ENCODE measurements at regions of chr5 and their contacts with region 1.

Region 1: DNA sequence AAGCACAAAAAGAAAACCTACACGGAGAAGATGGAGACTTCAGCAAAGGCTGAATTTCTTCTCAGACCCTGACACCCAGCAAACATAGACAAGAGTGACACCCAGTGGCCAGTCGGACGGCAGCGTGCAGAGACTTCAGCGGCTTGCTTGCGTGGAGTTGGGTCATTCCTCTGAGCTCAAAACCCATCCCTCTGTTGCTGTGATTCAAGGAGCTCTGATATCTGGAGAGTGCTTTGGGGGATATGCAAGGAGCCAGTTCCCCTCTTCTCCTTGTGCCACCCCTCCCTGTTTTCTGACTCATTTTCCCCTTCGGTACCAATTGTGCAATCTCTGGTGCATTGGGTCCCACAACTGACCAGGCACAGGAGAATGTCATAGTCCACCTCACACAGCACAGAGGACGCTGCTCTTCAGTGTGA is 27.5 kb downstream of the SH3TC2 start:
- DNase-seq: peak; percentile 87
- H3K4me3 Mint-ChIP-seq: no peak overlapping the region
- H3K27ac Mint-ChIP-seq: no peak overlapping the region
- H3K4me1 Mint-ChIP-seq: peaks cover 17% of the 10 kb centered on the region
- H3K27me3 Mint-ChIP-seq: no peaks in the 10 kb centered on the region
- CTCF ChIP-seq: peak; percentile 96

Region 2: GRCh38 chr5:148457183-148457620 is 578.2 kb before region 1 on chr5:
- CTCF ChIA-PET with region 1: interaction called, 10 read pairs
- POLR2A ChIA-PET with region 1: no interaction called
- intact Hi-C with region 1: no loop called
- DNase-seq: peak; percentile 60
- H3K4me3 Mint-ChIP-seq: no peak overlapping the region
- H3K27ac Mint-ChIP-seq: no peak overlapping the region
- H3K4me1 Mint-ChIP-seq: no peaks in the 10 kb centered on the region
- H3K27me3 Mint-ChIP-seq: peaks cover 45% of the 10 kb centered on the region
- CTCF ChIP-seq: peak; percentile 52

Region 3: GRCh38 chr5:148820461-148821395 is 214.7 kb before region 1 on chr5:
- CTCF ChIA-PET with region 1: interaction called, 28 read pairs
- POLR2A ChIA-PET with region 1: interaction called, 7 read pairs
- intact Hi-C with region 1: loop called (anchors 1 kb)
- DNase-seq: peak; percentile 63
- H3K4me3 Mint-ChIP-seq: no peak overlapping the region
- H3K27ac Mint-ChIP-seq: no peak overlapping the region
- H3K4me1 Mint-ChIP-seq: peaks cover 5% of the 10 kb centered on the region
- H3K27me3 Mint-ChIP-seq: no peaks in the 10 kb centered on the region
- CTCF ChIP-seq: peak; percentile 84

Region 4: GRCh38 chr5:148912714-148913398 is 122.5 kb before region 1 on chr5:
- CTCF ChIA-PET with region 1: interaction called, 43 read pairs
- POLR2A ChIA-PET with region 1: interaction called, 5 read pairs
- intact Hi-C with region 1: loop called (anchors 1 kb)
- DNase-seq: peak; percentile 98
- H3K4me3 Mint-ChIP-seq: peak overlapping the region; percentile 1
- H3K27ac Mint-ChIP-seq: peak overlapping the region; percentile 76
- H3K4me1 Mint-ChIP-seq: peaks cover 68% of the 10 kb centered on the region
- H3K27me3 Mint-ChIP-seq: no peaks in the 10 kb centered on the region
- CTCF ChIP-seq: peak; percentile 75

Region 5: DNA sequence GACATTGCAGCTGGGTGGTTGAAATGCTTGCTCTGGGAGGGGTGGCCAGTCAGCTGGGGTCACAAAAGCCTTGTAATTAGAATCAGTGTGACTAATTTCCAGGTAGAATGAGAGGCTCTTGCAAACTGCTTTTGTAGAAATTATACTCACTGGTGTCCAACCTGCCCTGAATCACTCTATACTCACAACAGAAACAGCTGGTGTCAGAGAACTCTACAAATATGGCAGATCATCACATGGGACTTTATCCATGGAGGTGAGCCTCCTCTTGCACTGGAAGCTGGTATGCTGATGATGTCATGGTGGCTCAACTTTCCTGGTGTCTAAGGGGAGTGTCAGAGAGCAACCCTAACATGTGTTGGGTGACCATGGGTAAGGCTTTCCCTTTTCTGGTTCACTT is 43.8 kb before region 1 on chr5:
- CTCF ChIA-PET with region 1: interaction called, 300 read pairs
- POLR2A ChIA-PET with region 1: interaction called, 4 read pairs
- intact Hi-C with region 1: no loop called
- DNase-seq: no peak
- H3K4me3 Mint-ChIP-seq: no peak overlapping the region
- H3K27ac Mint-ChIP-seq: no peak overlapping the region
- H3K4me1 Mint-ChIP-seq: peaks cover 42% of the 10 kb centered on the region
- H3K27me3 Mint-ChIP-seq: no peaks in the 10 kb centered on the region
- CTCF ChIP-seq: no peak

Region 6: DNA sequence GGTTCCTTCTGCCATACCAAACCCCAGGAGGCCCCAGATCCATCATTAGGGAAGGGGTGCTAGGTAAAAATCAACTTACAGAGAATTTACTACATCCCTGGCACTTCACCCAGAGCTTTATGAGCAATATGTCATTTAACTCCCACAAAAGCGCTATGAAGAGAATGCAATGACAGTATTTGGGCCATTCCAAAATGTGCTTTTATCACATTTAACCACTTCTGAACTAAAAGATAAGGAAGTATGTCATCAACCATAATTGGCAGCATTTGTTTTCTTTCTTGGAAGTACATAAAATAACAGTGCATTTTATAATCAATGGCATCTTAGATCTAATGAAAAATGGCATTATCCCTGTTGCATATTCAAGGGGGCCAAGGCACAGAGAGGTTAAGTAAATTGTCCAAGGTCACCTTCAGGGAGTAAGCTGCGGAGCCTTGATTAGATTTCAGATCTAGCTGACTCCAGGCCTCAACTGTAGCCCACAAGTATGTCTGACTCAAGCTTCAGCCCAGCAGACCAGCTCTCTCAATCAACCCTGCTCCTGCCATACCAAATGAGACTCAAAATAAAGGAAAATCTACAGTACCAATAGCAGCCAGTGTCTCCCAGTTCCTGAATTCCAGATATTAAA is 10.9 kb after region 1 on chr5:
- CTCF ChIA-PET with region 1: interaction called, 82 read pairs
- POLR2A ChIA-PET with region 1: interaction called, 4 read pairs
- intact Hi-C with region 1: no loop called
- DNase-seq: no peak
- H3K4me3 Mint-ChIP-seq: no peak overlapping the region
- H3K27ac Mint-ChIP-seq: no peak overlapping the region
- H3K4me1 Mint-ChIP-seq: peaks cover 6% of the 10 kb centered on the region
- H3K27me3 Mint-ChIP-seq: no peaks in the 10 kb centered on the region
- CTCF ChIP-seq: no peak

Region 7: DNA sequence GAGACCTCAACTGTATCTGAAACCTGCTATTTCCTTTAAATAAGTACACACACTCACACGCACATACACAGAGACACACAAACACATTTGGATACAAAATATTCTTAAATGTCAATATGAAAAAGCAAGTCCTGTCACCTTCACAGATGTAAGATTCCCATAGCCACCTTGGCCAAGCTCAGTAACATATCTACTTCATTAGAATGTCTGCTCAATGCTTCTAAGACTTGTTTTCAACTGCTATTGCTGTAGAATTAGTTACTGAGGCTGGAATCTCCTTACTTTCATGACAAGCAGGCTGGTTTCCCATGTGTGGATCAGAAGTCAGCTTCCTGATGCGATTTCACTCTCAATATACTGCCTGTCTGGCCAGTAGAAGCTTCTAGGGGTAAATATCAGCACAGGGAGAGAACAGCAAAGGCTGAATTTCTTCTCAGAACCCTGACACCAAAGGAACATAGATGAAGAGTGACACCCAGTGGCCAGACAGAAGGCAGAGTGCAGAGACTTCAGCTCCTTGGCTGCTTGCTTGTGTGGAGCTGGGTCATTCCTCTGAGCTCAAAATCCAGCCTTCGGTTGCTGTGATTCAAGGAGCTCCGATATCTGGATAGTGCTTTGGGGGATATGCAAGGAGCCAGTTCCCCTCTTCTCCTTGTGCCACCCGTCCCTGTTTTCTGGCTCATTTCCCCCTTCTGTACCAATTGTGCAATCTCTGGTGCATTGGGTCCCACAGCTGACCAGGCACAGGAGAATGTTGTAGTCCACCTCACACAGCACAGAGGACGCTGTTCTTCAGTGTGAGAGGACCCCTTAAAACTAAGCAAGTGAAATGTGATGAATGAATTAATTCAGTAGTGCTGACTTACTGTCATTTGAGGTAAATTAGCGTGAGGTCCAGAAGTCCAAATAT is 79.3 kb after region 1 on chr5:
- CTCF ChIA-PET with region 1: interaction called, 149 read pairs
- POLR2A ChIA-PET with region 1: interaction called, 22 read pairs
- intact Hi-C with region 1: loop called (anchors 1 kb)
- DNase-seq: peak; percentile 93
- H3K4me3 Mint-ChIP-seq: no peak overlapping the region
- H3K27ac Mint-ChIP-seq: peak overlapping the region; percentile 65
- H3K4me1 Mint-ChIP-seq: peaks cover 45% of the 10 kb centered on the region
- H3K27me3 Mint-ChIP-seq: no peaks in the 10 kb centered on the region
- CTCF ChIP-seq: peak; percentile 97

Measured in MCF 10A (cell line).